Activated CD4-positive, alpha-beta T cell treated with anti-CD3 and anti-CD28 coated beads for 36 hours (primary cell): ENCODE measurements at regions of chr5 and their contacts with region 1.

Region 1: DNA sequence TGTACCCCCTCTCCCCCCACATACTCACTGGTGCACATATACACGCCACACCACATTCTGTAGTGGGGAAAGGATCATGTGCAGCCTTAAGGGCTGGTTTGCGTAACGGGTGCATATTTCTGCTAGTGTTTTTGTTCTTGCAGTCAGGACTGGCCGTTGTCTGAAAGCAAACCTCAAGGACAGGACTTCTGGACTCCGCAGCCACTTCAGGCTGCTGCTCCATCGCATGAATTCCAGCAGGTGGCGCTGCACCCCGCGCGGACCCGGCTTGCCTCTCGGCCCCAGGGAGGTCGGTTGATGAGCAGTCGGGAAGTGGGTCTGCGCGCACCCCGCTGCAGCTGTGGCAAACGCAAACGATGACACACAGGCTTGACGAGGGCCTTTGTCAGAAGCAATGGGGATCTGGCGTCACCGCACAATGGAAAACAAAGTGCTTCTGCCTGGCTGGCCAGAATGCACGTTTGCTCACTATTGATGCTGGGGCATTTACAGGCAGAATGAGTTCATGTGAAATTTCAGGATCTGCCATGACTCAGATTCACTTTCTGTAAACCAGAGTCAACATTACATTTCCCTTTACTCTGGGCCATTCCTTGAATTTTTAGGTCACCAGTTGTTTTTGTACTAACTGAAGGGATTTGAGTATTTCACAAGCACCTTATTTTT is 36.3 kb upstream of the GLRX start:
- DNase-seq: peak; percentile 98
- ATAC-seq: peak; percentile 95
- H3K4me3 Mint-ChIP-seq: peak overlapping the region; percentile 12
- H3K27ac Mint-ChIP-seq: peak overlapping the region; percentile 86
- H3K4me1 Mint-ChIP-seq: peaks cover 58% of the 10 kb centered on the region
- H3K27me3 Mint-ChIP-seq: no peaks in the 10 kb centered on the region

Region 2: DNA sequence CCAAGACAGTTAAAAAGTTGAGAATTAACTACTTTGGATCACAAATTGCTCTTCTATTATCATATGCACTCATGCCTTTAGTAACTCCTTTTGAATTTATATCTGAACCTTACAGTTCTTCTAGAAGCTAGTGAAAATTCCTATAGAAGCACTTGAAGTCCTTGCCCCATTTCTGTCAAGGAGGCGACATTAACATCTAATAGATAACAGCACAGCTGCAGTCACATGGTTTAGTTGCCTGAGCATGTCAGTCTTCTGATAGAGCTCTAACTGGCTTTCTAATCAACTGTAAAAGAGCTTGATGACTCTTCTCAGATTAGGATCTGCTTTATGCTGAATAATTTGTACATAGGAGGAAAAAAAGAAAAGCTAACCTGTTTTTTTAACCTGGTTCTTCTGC is 203.2 kb before region 1 on chr5:
- CTCF ChIA-PET with region 1: no interaction called
- POLR2A ChIA-PET with region 1: no interaction called
- intact Hi-C with region 1: no loop called
- DNase-seq: no peak
- ATAC-seq: no peak
- H3K4me3 Mint-ChIP-seq: no peak overlapping the region
- H3K27ac Mint-ChIP-seq: no peak overlapping the region
- H3K4me1 Mint-ChIP-seq: no peaks in the 10 kb centered on the region
- H3K27me3 Mint-ChIP-seq: no peaks in the 10 kb centered on the region

Region 3: DNA sequence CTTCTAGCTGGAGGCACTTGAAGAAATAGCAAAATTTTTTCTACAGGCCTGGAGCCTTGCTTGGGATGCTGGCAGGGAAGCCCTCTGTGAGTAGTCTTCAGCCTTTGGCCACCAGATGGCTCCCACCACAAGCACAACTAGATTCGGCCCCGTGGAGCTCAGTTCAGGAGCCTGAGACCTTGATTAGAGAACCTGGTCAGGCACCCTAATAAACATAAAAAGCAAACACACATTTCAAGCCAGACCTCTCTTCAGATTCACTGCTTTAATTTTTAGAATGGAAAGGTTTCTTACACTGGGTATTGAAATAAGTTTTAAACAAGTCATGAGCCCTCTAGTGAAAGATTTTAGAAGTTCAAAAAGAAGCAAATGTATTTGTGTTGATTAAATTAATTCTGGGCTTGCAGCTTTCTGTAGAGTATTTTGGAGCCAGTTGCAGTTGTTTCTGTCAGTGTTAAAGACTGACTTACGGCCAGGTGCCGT is 77.7 kb before region 1 on chr5:
- CTCF ChIA-PET with region 1: interaction called, 56 read pairs
- POLR2A ChIA-PET with region 1: no interaction called
- intact Hi-C with region 1: no loop called
- DNase-seq: peak; percentile 84
- ATAC-seq: peak; percentile 99
- H3K4me3 Mint-ChIP-seq: no peak overlapping the region
- H3K27ac Mint-ChIP-seq: peak overlapping the region; percentile 12
- H3K4me1 Mint-ChIP-seq: peaks cover 5% of the 10 kb centered on the region
- H3K27me3 Mint-ChIP-seq: no peaks in the 10 kb centered on the region

Region 4: DNA sequence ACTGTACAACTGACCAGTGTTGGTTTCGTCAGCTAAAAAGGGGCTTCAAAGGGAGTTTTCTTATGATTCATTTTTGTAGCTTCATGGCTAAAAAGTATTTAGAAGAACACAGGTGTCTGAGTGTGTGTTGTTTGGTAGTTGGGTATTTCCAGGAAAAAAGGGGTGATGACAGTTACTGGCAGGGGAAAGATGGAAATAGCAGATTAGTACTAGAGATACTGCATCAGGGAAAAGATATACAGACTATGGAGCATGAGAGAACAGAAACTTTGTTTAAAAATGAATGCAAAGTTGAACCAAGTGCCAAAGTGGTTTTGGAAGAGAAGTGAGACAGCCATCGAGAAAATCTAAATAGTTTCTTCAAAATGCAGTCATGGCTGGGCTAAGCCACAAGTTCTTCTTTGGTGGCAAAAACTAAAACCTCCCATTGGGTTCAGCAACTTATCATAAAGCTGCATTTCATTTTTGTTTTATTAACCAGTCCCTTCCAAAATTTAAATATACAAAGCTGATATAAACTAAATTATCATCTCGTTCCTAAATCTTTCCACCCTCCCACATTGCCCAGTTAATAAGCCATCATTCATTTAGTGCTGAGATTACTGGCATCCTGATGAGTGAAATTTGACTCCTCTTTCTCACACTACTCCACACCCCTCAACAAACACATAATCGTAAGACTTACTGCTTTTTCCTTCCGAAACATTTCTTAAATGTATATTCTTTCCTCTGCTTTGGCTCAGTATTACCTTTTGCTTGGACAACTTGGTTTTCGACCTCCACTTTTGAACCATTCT is 69.3 kb after region 1 on chr5:
- CTCF ChIA-PET with region 1: interaction called, 3 read pairs
- POLR2A ChIA-PET with region 1: no interaction called
- intact Hi-C with region 1: loop called (anchors 1 to 2 kb)
- DNase-seq: no peak
- ATAC-seq: peak; percentile 64
- H3K4me3 Mint-ChIP-seq: no peak overlapping the region
- H3K27ac Mint-ChIP-seq: peak overlapping the region; percentile 75
- H3K4me1 Mint-ChIP-seq: peaks cover 21% of the 10 kb centered on the region
- H3K27me3 Mint-ChIP-seq: no peaks in the 10 kb centered on the region

Region 5: GRCh38 chr5:96113170-96113939 is 254.6 kb after region 1 on chr5:
- CTCF ChIA-PET with region 1: no interaction called
- POLR2A ChIA-PET with region 1: interaction called, 5 read pairs
- intact Hi-C with region 1: loop called in 1 of 2 experiments (anchors 2 kb)
- DNase-seq: no peak
- ATAC-seq: peak; percentile 71
- H3K4me3 Mint-ChIP-seq: no peak overlapping the region
- H3K27ac Mint-ChIP-seq: peak overlapping the region; percentile 84
- H3K4me1 Mint-ChIP-seq: peaks cover 35% of the 10 kb centered on the region
- H3K27me3 Mint-ChIP-seq: peaks cover 3% of the 10 kb centered on the region

Region 6: DNA sequence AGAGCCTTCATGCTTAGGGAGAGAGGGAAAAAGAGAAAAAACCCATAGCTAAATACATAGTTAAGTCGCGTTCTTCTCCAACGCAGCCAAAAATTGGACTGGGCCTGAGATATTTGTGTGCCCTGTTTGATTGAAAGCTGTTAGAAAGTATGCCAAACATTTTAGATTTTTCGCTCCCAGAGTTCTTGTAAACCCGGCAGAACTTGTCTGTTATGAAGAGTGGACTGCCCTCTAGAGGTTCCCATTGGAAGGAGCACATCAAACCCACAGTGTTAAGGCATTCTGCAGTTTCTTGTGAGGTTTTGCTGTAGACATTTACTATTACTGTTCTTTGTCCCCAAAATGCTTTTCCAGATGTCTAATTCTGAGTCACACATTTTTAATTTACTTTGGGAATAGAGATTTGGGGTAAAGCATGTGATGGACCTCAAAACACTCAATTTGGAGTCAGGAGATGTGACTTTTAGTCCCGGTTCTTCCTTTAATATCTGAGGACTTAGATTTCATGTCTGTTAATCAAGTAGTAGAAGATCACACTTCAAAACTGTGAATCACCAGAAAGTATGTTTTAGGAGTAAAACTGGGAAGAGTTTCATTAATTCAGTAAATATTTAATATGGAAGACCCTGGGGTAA is 477.7 kb after region 1 on chr5:
- CTCF ChIA-PET with region 1: interaction called, 10 read pairs
- POLR2A ChIA-PET with region 1: no interaction called
- intact Hi-C with region 1: loop called (anchors 1 kb)
- DNase-seq: peak; percentile 74
- ATAC-seq: peak; percentile 82
- H3K4me3 Mint-ChIP-seq: no peak overlapping the region
- H3K27ac Mint-ChIP-seq: no peak overlapping the region
- H3K4me1 Mint-ChIP-seq: peaks cover 9% of the 10 kb centered on the region
- H3K27me3 Mint-ChIP-seq: peaks cover 26% of the 10 kb centered on the region

Region 7: GRCh38 chr5:96702503-96703383 is 843.9 kb after region 1 on chr5:
- CTCF ChIA-PET with region 1: no interaction called
- POLR2A ChIA-PET with region 1: no interaction called
- intact Hi-C with region 1: loop called in 1 of 2 experiments (anchors 2 kb)
- DNase-seq: peak; percentile 92
- ATAC-seq: peak; percentile 78
- H3K4me3 Mint-ChIP-seq: peak overlapping the region; percentile 91
- H3K27ac Mint-ChIP-seq: peak overlapping the region; percentile 81
- H3K4me1 Mint-ChIP-seq: peaks cover 51% of the 10 kb centered on the region
- H3K27me3 Mint-ChIP-seq: no peaks in the 10 kb centered on the region